Ovary (tissue), 10 donors: ENCODE measurements at regions of chr11 and their contacts with region 1.

Region 1: GRCh38 chr11:123478352-123478987 is 48.4 kb downstream of the GRAMD1B start:
- DNase-seq: peak; percentile 53 to 67 (median 58)
- H3K4me3 ChIP-seq: no peak overlapping the region
- H3K27ac ChIP-seq: no peak overlapping the region
- H3K4me1 ChIP-seq: no peaks in the 10 kb centered on the region
- H3K27me3 ChIP-seq: no peaks in the 10 kb centered on the region
- CTCF ChIP-seq: peak; percentile 44 to 80 (median 74)
- EP300 ChIP-seq: no peak
- POLR2A ChIP-seq: no peak

Region 2: GRCh38 chr11:123301696-123302400 is 176.6 kb before region 1 on chr11:
- intact Hi-C with region 1: loop called in 2 of 4 experiments (anchors 5 kb)
- DNase-seq: peak; percentile 39 to 77 (median 58)
- H3K4me3 ChIP-seq: peak overlapping the region; percentile 25
- H3K27ac ChIP-seq: no peak overlapping the region
- H3K4me1 ChIP-seq: no peaks in the 10 kb centered on the region
- H3K27me3 ChIP-seq: no peaks in the 10 kb centered on the region
- CTCF ChIP-seq: peak; percentile 40 to 77 (median 72)
- EP300 ChIP-seq: no peak
- POLR2A ChIP-seq: no peak

Region 3: DNA sequence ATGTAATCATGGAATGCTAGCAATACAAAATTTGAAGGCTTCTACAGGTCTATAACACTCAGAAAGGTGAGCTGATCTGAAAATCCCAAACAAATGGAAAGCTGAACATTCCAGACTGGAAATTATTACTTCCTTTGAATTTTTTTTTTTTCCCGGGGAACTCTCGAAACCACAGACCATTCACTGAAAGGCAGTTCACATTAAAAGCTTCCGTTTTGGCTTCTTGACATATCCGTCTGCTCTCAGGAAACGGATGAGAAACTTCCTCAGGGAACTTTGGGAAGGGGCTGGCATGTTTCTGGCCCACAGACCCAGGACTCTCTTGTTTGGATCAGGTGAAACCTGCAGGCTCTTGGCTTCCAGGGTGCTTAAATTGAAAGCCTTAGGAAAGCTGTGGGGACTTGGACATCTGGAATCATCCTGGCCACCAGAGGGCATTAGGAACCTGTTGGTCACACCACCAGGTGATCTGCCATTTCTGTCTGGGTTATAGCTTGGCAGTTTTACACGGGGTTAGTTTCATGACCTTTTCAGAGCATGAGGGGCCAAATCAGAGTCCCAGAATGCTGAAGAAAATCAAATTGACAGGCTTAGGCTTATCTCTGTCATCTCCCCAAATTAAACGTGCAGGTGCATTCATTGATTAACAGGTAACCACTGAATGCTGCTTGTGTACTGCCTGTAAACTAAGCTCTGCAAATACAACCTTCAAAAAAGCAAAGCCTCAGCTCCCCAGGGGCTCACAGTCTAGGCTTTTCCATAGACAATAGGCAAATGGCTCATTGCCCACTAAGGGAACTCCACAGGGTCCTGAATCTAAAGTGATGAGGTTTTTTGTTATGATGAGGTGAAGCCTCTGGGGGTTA is 71.1 kb before region 1 on chr11:
- intact Hi-C with region 1: loop called (anchors 2 to 10 kb)
- DNase-seq: peak; percentile 58 to 79 (median 69)
- H3K4me3 ChIP-seq: no peak overlapping the region
- H3K27ac ChIP-seq: no peak overlapping the region
- H3K4me1 ChIP-seq: no peaks in the 10 kb centered on the region
- H3K27me3 ChIP-seq: no peaks in the 10 kb centered on the region
- CTCF ChIP-seq: peak; percentile 60 to 77 (median 76)
- EP300 ChIP-seq: no peak
- POLR2A ChIP-seq: no peak

Region 4: GRCh38 chr11:123624974-123625373 is 146.5 kb after region 1 on chr11:
- intact Hi-C with region 1: no loop called
- DNase-seq: no peak
- H3K4me3 ChIP-seq: no peak overlapping the region
- H3K27ac ChIP-seq: no peak overlapping the region
- H3K4me1 ChIP-seq: peaks cover 4% of the 10 kb centered on the region
- H3K27me3 ChIP-seq: no peaks in the 10 kb centered on the region
- CTCF ChIP-seq: no peak
- EP300 ChIP-seq: no peak
- POLR2A ChIP-seq: no peak